ENCODE measurements at regions of chr9 and their contacts with region 1.

Region 1: DNA sequence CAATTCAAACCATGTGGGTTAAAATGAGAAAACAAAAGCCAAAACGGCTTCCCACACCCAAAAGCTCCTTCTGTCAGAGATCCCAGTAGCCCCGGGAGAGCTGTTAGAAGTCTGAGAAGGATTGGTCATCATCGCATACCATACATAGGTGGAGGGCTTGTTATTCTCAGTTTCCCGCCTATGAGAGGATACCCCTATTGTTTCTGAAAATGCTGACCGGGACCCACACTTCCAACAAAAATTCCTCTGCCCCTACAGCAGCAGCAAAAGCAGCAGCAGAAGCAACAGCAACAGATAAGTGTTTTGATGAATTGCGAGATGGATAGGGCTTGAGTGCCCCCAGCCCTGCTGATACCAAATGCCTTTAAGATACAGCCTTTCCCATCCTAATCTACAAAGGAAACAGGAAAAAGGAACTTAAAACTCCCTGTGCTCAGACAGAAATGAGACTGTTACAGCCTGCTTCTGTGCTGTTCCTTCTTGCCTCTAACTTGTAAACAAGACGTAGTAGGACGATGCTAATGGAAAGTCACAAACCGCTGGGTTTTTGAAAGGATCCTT is at the start of gene TEK:
- DNase-seq: no peak
- H3K4me3 ChIP-seq: no peak within 1 kb of the TSS
- H3K27ac ChIP-seq: no peak within 1 kb of the TSS
- H3K4me1 ChIP-seq: peaks cover 10% of the 10 kb centered on the region
- H3K27me3 ChIP-seq: no peaks in the 10 kb centered on the region
- CTCF ChIP-seq: no peak
- total RNA-seq, gene TEK: not detected in 2 replicates

Region 2: GRCh38 chr9:27047136-27047535 is 61.9 kb before region 1 on chr9:
- CTCF ChIA-PET with region 1: no interaction called
- POLR2A ChIA-PET with region 1: no interaction called
- intact Hi-C with region 1: no loop called
- DNase-seq: no peak
- H3K4me3 ChIP-seq: no peak overlapping the region
- H3K27ac ChIP-seq: no peak overlapping the region
- H3K4me1 ChIP-seq: no peaks in the 10 kb centered on the region
- H3K27me3 ChIP-seq: no peaks in the 10 kb centered on the region
- CTCF ChIP-seq: no peak

Region 3: GRCh38 chr9:27154908-27155307 is 45.8 kb after region 1 on chr9:
- CTCF ChIA-PET with region 1: no interaction called
- POLR2A ChIA-PET with region 1: no interaction called
- intact Hi-C with region 1: loop called (anchors 5 kb)
- DNase-seq: no peak
- H3K4me3 ChIP-seq: no peak overlapping the region
- H3K27ac ChIP-seq: no peak overlapping the region
- H3K4me1 ChIP-seq: peaks cover 10% of the 10 kb centered on the region
- H3K27me3 ChIP-seq: no peaks in the 10 kb centered on the region
- CTCF ChIP-seq: no peak

Measured in PC-9 (cell line).